ENCODE measurements at regions of chr20 and their contacts with region 1.

Region 1: GRCh38 chr20:3888622-3889488 is at the start of gene PANK2:
- DNase-seq: peak; percentile 98
- ATAC-seq: peak; percentile 99
- H3K4me3 Mint-ChIP-seq: peak within 1 kb of the TSS; percentile 95
- H3K27ac Mint-ChIP-seq: peak within 1 kb of the TSS; percentile 93
- H3K4me1 Mint-ChIP-seq: peaks cover 46% of the 10 kb centered on the region
- H3K27me3 Mint-ChIP-seq: no peaks in the 10 kb centered on the region
- total RNA-seq, gene PANK2: 37.2 to 50.2 TPM

Region 2: GRCh38 chr20:3795511-3796468 is 93.1 kb before region 1 on chr20 and contains the start of gene CDC25B:
- CTCF ChIA-PET with region 1: no interaction called
- POLR2A ChIA-PET with region 1: interaction called, 3 read pairs
- intact Hi-C with region 1: loop called in 1 of 2 experiments (anchors 1 kb)
- DNase-seq: peak; percentile 95
- ATAC-seq: peak; percentile 82
- H3K4me3 Mint-ChIP-seq: peak within 1 kb of the TSS; percentile 93
- H3K27ac Mint-ChIP-seq: peak within 1 kb of the TSS; percentile 98
- H3K4me1 Mint-ChIP-seq: peaks cover 47% of the 10 kb centered on the region
- H3K27me3 Mint-ChIP-seq: no peaks in the 10 kb centered on the region
- total RNA-seq, gene CDC25B: 79.8 to 96.2 TPM

Region 3: DNA sequence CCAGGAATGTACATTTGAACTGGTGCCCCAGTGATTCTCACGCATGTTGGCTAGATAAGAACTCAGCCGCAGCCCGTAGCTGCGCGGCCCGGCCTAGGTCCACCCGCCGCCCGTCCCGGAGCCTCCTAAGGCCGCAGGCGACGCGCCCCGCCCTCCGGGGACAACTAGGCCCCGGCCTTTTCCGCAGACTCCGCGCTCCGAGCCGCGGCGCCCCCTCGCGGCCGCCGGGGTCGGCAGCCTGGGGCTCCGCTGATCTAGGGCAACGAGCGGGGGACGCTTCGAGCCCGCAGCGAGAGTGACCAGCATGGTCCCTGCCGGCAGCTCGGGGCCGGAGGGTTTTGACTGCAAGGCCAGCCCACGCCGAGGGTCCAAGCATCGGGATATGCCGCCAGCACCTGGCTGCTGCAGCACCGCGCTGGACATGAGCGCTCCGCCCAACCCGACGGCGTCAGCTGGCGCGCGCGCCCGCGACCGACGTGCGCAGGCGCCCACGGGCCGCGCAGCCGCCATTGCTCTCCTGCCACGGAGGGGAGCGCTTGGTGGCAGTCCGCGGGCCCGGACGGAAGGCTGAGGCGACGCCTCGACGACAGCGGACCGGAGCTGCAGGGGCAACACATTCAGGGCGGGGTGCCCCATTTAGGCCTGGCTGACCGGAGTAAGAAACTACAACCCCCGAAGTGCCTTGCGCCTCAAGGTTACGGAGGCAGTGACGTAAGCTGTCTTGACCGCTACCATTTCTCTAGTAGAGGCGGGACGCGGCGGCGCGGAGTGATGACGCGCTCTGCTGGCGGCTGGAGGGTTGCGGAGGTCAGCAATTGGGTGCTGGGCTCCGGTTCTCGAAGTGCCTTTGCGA is 68.6 kb before region 1 on chr20 and contains the start of gene AP5S1:
- CTCF ChIA-PET with region 1: interaction called, 4 read pairs
- POLR2A ChIA-PET with region 1: no interaction called
- intact Hi-C with region 1: loop called in 1 of 2 experiments (anchors 1 kb)
- DNase-seq: peak; percentile 96
- ATAC-seq: peak; percentile 86
- H3K4me3 Mint-ChIP-seq: peak within 1 kb of the TSS; percentile 89
- H3K27ac Mint-ChIP-seq: peak within 1 kb of the TSS; percentile 96
- H3K4me1 Mint-ChIP-seq: peaks cover 33% of the 10 kb centered on the region
- H3K27me3 Mint-ChIP-seq: no peaks in the 10 kb centered on the region
- total RNA-seq, gene AP5S1: 9.1 to 11.3 TPM

Region 4: GRCh38 chr20:3911956-3912355 is 23.1 kb after region 1 on chr20:
- CTCF ChIA-PET with region 1: interaction called, 5 read pairs
- POLR2A ChIA-PET with region 1: no interaction called
- intact Hi-C with region 1: loop called (anchors 1 to 2 kb)
- DNase-seq: no peak
- ATAC-seq: no peak
- H3K4me3 Mint-ChIP-seq: no peak overlapping the region
- H3K27ac Mint-ChIP-seq: peak overlapping the region; percentile 2
- H3K4me1 Mint-ChIP-seq: peaks cover 45% of the 10 kb centered on the region
- H3K27me3 Mint-ChIP-seq: no peaks in the 10 kb centered on the region

Region 5: GRCh38 chr20:4065391-4065844 is 176.6 kb after region 1 on chr20:
- CTCF ChIA-PET with region 1: no interaction called
- POLR2A ChIA-PET with region 1: no interaction called
- intact Hi-C with region 1: no loop called
- DNase-seq: no peak
- ATAC-seq: no peak
- H3K4me3 Mint-ChIP-seq: no peak overlapping the region
- H3K27ac Mint-ChIP-seq: no peak overlapping the region
- H3K4me1 Mint-ChIP-seq: peaks cover 13% of the 10 kb centered on the region
- H3K27me3 Mint-ChIP-seq: no peaks in the 10 kb centered on the region

Region 6: DNA sequence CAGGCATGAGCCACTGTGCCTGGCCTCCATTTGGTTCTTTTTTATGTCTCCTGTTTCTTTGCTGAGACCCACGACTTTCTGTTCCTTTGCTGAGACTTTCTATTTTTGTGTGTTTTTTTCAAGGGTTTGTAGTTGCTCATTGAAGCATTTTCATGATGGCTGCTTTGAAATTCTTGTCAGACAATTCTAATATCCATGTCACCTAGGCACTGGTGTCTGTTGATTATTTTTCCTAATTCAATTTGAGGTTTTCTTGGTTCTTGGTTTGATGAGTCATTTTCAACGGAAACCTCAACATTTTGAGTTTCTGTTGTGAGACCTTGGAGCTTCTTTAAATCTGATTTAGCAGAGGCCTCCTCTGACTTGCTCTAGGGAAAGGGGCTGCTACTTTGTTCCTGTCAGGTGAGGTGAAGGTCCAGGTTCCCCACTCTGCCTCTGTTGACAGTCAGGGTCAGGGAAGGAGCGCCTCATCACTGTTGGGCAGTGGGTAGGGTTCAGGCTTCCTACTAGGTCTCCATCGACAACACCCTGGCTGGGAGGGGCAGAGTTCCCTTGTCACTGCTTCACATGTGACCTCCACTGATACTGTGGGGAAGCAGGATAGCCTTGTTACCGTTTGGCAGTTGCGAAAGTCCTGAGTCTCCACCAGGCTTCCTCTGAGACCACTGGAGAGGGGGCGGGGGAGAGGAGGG is 193.7 kb after region 1 on chr20:
- CTCF ChIA-PET with region 1: interaction called, 7 read pairs
- POLR2A ChIA-PET with region 1: no interaction called
- intact Hi-C with region 1: loop called (anchors 1 to 5 kb)
- DNase-seq: peak; percentile 69
- ATAC-seq: peak; percentile 78
- H3K4me3 Mint-ChIP-seq: peak overlapping the region; percentile 9
- H3K27ac Mint-ChIP-seq: peak overlapping the region; percentile 87
- H3K4me1 Mint-ChIP-seq: peaks cover 41% of the 10 kb centered on the region
- H3K27me3 Mint-ChIP-seq: peaks cover 5% of the 10 kb centered on the region

Measured in activated CD4-positive, alpha-beta T cell treated with anti-CD3 and anti-CD28 coated beads for 36 hours (primary cell).